ENCODE measurements at regions of chr19 and their contacts with region 1.

Region 1: GRCh38 chr19:13104360-13104847 is 1.7 kb upstream of the LYL1 start:
- DNase-seq: peak; percentile 75
- ATAC-seq: peak; percentile 55
- H3K4me3 Mint-ChIP-seq: peak overlapping the region; percentile 80
- H3K27ac Mint-ChIP-seq: peak overlapping the region; percentile 86
- H3K4me1 Mint-ChIP-seq: peaks cover 36% of the 10 kb centered on the region
- H3K27me3 Mint-ChIP-seq: no peaks in the 10 kb centered on the region

Region 2: GRCh38 chr19:12974301-12975220 is 129.8 kb before region 1 on chr19:
- CTCF ChIA-PET with region 1: interaction called, 26 read pairs
- POLR2A ChIA-PET with region 1: no interaction called
- DNase-seq: no peak
- ATAC-seq: no peak
- H3K4me3 Mint-ChIP-seq: no peak overlapping the region
- H3K27ac Mint-ChIP-seq: no peak overlapping the region
- H3K4me1 Mint-ChIP-seq: no peaks in the 10 kb centered on the region
- H3K27me3 Mint-ChIP-seq: peaks cover 8% of the 10 kb centered on the region

Region 3: DNA sequence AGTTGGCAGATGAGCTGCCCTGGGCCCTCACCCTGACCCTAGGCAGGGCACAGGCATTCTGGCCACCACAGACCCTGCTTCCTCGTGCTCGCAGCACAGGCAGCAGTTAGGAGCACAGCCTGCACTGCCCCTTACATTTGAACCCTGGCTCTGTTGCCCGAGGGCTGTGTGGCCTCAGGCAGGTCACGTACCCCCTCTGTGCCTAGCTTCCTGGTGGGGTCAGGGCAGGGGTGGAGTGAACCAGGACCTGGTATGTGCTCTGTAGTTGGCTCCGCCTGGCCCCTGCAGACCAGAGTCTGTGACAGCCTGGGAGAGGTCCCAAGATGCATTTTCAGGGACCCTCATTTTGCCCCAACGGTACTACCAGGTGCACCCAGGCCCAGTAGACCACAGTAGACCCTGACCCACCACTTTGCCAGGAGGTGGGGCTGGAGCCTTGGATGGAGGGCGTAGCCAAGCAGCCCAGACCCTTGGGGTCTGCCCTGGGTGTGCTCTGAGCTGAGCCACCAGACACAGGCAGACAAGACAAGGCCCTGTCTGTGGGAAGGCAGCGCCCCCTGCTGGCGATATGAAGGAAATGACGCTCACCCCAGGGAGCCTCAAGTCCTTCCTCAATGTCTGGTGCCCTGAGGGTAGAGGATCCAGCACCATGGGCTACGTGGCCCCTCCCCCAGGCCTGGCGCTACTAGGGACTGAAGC is 10.8 kb before region 1 on chr19:
- CTCF ChIA-PET with region 1: interaction called, 22 read pairs
- POLR2A ChIA-PET with region 1: interaction called, 4 read pairs
- DNase-seq: peak; percentile 88
- ATAC-seq: peak; percentile 79
- H3K4me3 Mint-ChIP-seq: no peak overlapping the region
- H3K27ac Mint-ChIP-seq: no peak overlapping the region
- H3K4me1 Mint-ChIP-seq: peaks cover 26% of the 10 kb centered on the region
- H3K27me3 Mint-ChIP-seq: peaks cover 32% of the 10 kb centered on the region

Region 4: DNA sequence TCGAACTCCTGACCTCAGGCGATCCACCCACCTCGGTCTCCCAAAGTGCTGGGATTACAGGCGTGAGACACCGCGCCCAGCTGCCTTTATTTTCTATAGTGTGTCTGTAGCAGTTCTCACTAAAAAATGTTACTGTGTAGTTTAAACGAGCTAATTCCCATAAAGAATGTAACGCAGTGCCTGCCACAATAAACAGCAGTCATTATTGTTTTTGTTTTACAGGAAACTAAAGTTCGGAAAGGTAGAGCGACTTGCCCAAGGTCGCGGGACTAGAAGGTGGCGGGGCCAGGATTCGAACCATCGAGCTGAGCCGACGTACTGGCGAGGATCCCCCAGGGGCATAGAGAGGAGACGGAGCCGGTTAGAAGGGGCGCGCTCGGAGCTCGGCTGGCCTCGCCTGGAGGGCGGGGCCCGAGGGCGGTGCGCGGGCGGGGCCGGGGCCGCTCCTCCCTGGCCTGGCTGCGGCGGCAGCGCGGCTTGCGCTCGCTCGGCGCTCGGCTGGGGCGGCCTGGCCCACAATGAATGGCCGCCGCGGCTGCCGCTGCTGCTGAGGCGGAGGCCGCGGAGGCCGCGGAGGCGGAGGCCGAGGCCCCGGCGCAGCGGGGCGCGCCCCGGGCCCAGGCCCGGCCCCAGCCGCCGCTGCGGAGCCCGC is 13.5 kb after region 1 on chr19 and contains the start of gene NACC1:
- CTCF ChIA-PET with region 1: interaction called, 28 read pairs
- POLR2A ChIA-PET with region 1: interaction called, 13 read pairs
- DNase-seq: peak; percentile 91
- ATAC-seq: peak; percentile 85
- H3K4me3 Mint-ChIP-seq: peak within 1 kb of the TSS; percentile 97
- H3K27ac Mint-ChIP-seq: peak within 1 kb of the TSS; percentile 96
- H3K4me1 Mint-ChIP-seq: peaks cover 53% of the 10 kb centered on the region
- H3K27me3 Mint-ChIP-seq: no peaks in the 10 kb centered on the region
- total RNA-seq, gene NACC1: 74.6 to 84.8 TPM

Region 5: DNA sequence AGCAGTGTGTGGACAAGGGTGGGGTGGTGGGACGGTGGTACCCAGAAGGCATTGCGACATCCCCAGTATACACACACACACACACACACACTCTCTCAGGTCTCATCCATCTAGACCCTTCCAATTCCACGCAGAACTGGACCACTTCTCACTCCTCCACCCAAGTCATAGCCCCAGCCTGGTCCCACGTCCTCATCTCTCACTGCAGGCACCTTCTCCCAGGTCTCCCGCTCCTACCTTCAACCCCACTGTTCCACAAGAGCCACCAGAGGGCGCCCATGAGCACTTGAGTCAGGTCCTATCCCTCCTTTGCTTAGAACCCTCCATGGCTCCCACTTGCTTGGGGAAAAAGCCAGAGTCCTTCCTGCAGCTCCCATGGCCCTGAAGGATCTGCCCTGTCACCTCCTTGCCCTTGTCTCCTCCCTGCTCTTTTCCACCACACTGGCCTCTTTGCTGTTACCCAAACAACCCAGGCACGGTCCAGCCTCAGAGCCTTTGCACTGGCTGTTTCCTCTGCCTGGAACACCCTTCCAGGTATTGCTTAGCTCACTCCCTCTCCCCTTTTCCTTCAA is 108.4 kb after region 1 on chr19:
- CTCF ChIA-PET with region 1: no interaction called
- POLR2A ChIA-PET with region 1: no interaction called
- DNase-seq: peak; percentile 83
- ATAC-seq: peak; percentile 49
- H3K4me3 Mint-ChIP-seq: no peak overlapping the region
- H3K27ac Mint-ChIP-seq: peak overlapping the region; percentile 13
- H3K4me1 Mint-ChIP-seq: peaks cover 29% of the 10 kb centered on the region
- H3K27me3 Mint-ChIP-seq: no peaks in the 10 kb centered on the region